ENCODE measurements at regions of chr16 and their contacts with region 1.

Region 1: GRCh38 chr16:28277537-28278388 is 14.6 kb upstream of the SBK1 start:
- DNase-seq: peak; percentile 93
- ATAC-seq: peak; percentile 80
- H3K4me3 Mint-ChIP-seq: peak overlapping the region; percentile 73
- H3K27ac Mint-ChIP-seq: peak overlapping the region; percentile 70; the same call in 1 of the 2 replicates
- H3K4me1 Mint-ChIP-seq: peaks cover 16% of the 10 kb centered on the region
- H3K27me3 Mint-ChIP-seq: peaks cover 27% of the 10 kb centered on the region
- CTCF ChIP-seq: peak; percentile 99

Region 2: GRCh38 chr16:28181515-28181914 is 96.2 kb before region 1 on chr16:
- CTCF ChIA-PET with region 1: no interaction called
- POLR2A ChIA-PET with region 1: no interaction called
- DNase-seq: no peak
- ATAC-seq: no peak
- H3K4me3 Mint-ChIP-seq: no peak overlapping the region
- H3K27ac Mint-ChIP-seq: peak overlapping the region; percentile 51; the same call in 1 of the 2 replicates
- H3K4me1 Mint-ChIP-seq: peaks cover 24% of the 10 kb centered on the region
- H3K27me3 Mint-ChIP-seq: no peaks in the 10 kb centered on the region
- CTCF ChIP-seq: no peak

Region 3: GRCh38 chr16:28291873-28292660 is 14.3 kb after region 1 on chr16 and contains the start of gene SBK1:
- CTCF ChIA-PET with region 1: interaction called, 11 read pairs
- POLR2A ChIA-PET with region 1: interaction called, 5 read pairs
- DNase-seq: peak; percentile 80
- ATAC-seq: peak; percentile 74
- H3K4me3 Mint-ChIP-seq: peak within 1 kb of the TSS; percentile 91
- H3K27ac Mint-ChIP-seq: peak within 1 kb of the TSS; percentile 82
- H3K4me1 Mint-ChIP-seq: peaks cover 45% of the 10 kb centered on the region
- H3K27me3 Mint-ChIP-seq: no peaks in the 10 kb centered on the region
- CTCF ChIP-seq: no peak
- total RNA-seq, gene SBK1: 79.4 to 85.7 TPM (median 82.6 TPM) in 3 replicates

Region 4: DNA sequence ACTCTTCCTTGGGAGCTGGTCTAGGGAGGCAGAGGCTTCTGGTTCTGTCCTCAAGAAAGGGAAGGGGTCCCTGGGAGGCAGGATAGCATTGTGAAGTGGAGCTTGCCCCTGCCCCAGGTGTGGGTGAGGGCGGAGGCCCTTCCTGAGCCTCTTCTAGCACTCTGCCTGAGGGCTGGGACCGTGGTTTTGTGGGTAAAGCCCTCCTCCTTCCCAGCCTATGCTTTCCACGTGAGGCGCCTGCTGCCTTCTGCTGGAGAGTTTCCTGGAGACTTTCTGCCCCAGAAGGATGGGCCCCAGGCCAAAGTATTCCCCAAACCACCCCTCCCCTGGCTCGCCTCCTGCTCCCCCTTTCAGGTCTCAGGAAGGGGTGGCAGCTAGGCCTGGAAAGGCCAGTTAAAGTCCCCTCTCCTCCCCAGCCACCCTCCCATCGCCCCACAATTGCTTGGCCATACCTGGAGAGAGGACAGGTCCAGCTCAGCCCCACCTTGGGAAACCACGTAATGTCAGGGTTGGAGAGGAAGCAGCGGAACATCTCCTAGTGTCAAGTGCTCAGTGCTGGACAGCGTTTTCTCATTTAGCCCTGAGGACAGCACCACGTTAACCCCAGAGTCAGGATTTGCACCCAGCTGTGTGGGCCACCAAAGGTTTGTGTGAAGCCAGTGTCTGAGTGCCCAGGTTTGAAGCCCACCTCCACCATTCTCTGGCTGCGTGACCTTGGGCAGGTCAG is 20.2 kb after region 1 on chr16:
- CTCF ChIA-PET with region 1: interaction called, 11 read pairs
- POLR2A ChIA-PET with region 1: no interaction called
- DNase-seq: no peak
- ATAC-seq: peak; percentile 6
- H3K4me3 Mint-ChIP-seq: no peak overlapping the region
- H3K27ac Mint-ChIP-seq: peak overlapping the region; percentile 77
- H3K4me1 Mint-ChIP-seq: peaks cover 49% of the 10 kb centered on the region
- H3K27me3 Mint-ChIP-seq: no peaks in the 10 kb centered on the region
- CTCF ChIP-seq: no peak

Region 5: GRCh38 chr16:28597692-28598261 is 320.0 kb after region 1 on chr16:
- CTCF ChIA-PET with region 1: no interaction called
- POLR2A ChIA-PET with region 1: no interaction called
- DNase-seq: peak; percentile 66
- ATAC-seq: peak; percentile 71
- H3K4me3 Mint-ChIP-seq: no peak overlapping the region
- H3K27ac Mint-ChIP-seq: 0 out of 2 replicates have a peak overlapping the region, but pooled peaks have one; percentile 15
- H3K4me1 Mint-ChIP-seq: peaks cover 19% of the 10 kb centered on the region
- H3K27me3 Mint-ChIP-seq: no peaks in the 10 kb centered on the region
- CTCF ChIP-seq: no peak

Measured in WTC11 (cell line).